ENCODE measurements at regions of chr12 and their contacts with region 1.

Region 1: DNA sequence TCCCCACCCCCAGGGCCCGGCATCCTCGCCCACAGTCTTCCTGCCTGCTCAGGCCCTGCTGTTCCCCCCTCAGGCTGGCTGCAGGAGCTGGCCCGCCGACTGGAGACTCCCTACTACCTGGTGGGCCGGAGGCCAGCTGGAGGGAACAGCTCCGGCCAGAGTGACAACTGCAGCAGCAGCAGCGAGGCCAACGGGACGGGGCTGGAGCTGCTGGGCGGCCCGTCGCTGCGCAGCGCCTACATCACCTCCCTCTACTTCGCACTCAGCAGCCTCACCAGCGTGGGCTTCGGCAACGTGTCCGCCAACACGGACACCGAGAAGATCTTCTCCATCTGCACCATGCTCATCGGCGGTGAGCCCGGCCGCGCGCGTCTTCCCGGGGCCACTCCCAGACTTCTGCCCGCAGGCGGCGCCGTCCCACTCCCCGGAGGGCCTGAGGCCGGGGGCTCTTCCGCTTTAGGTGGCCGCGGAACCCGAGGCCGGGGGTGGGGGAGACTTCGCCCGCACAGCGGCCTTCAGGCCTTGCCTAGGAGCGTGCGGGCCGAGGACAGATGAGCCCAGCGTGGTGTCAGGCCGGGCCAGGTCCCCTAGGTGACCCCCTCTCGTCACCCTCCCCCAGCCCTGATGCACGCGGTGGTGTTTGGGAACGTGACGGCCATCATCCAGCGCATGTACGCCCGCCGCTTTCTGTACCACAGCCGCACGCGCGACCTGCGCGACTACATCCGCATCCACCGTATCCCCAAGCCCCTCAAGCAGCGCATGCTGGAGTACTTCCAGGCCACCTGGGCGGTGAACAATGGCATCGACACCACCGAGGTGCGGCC is 10.2 kb downstream of the KCNH3 start:
- DNase-seq: peak in 1 of 2 donors; percentile 46
- H3K4me3 ChIP-seq: peak overlapping the region; percentile 28 to 68 (median 38)
- H3K27ac ChIP-seq: peak overlapping the region in 1 of 2 donors; percentile 7
- H3K4me1 ChIP-seq: peaks cover 0 to 9% of the 10 kb centered on the region in 2 donors
- H3K27me3 ChIP-seq: peaks cover 0 to 13% of the 10 kb centered on the region in 2 donors
- CTCF ChIP-seq: no peak
- POLR2A ChIP-seq: no peak

Region 2: DNA sequence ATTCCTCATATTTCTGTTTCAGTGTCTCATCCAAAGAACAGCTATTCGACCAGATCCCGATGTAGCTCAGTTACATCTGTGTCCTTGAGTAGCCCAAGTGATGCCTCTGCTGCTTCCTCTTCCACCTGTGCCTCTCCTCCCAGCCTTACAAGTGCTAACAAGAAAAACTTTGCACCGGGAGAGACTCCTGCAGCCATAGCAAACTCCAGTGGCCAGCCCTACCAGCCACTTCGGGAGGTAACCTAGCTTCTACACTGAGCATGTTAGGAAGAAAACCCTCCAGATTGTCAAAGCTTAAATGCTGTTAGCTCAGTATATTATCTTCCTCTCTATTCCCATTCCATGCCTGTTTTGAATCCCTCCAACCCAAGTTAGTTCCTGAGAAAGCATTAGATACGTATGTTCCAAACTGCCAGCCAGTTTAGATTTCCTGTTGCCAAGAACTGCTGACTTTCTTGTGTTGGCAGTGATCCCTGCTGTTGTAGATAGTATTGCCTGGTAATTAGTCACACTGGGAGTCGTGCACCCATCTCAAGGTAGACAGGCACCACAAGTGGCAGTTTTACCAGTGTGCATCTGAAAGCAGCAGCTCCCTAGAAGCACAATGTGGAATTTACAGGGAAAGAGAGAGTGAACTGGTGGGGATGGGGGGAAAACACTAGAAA is 24.2 kb before region 1 on chr12:
- intact Hi-C with region 1: loop called (anchors 1 kb)
- DNase-seq: no peak
- H3K4me3 ChIP-seq: no peak overlapping the region
- H3K27ac ChIP-seq: no peak overlapping the region
- H3K4me1 ChIP-seq: no peaks in the 10 kb centered on the region
- H3K27me3 ChIP-seq: no peaks in the 10 kb centered on the region
- CTCF ChIP-seq: no peak
- POLR2A ChIP-seq: no peak